Activated CD8-positive, alpha-beta T cell treated with anti-CD3 and anti-CD28 coated beads, Interleukin-2, amount 10 ng/mL, durations not matched to agents 7 days and 5 days (primary cell): ENCODE measurements at regions of chr19 and their contacts with region 1.

Region 1: DNA sequence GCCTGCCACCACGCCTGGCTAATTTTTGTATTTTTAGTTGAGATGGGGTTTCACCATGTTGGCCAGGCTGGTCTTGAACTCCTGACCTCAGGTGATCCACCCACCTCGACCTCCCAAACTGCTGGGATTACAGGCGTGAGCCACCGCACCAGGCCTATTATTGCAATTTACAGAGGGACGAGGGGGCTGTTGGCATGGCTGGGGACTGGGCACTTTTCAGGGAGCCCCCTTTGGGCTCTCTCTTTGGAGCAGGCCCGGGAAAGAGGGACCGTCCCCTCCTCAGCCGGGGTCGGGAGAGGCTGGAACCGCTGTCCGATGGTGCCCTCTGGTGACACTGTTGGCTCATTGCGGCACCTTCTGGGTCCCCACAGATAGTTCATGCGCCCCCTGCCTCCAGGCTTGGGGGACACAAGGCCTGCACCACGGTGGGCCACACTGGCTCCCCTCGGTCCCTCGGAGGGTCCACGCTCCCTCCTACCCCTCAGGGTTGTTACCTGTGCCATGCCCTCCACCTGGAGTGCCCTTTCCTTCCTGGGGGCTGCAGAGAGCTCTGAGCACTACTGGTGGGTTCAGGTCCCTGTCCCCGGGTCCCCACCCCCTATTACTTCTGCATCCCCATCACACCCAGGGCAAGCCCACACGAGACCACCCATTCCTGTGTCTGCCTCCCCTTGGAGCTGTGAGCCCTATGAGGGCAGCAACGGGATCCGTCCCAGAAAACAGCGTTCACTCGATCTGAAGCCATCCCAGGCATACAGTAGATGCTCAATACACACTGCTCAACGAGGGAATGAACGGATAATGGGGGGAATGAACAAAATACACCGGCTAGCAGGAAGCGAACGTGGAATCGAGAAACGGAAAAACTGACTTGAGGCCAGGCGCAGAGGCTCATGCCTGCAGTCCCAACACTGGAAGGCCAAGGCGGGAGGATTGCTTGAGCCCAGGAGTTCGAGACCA is 12.5 kb downstream of the FEM1A start:
- DNase-seq: peak; percentile 81
- ATAC-seq: peak; percentile 94
- H3K4me3 Mint-ChIP-seq: no peak overlapping the region
- H3K27ac Mint-ChIP-seq: no peak overlapping the region
- H3K4me1 Mint-ChIP-seq: no peaks in the 10 kb centered on the region
- H3K27me3 Mint-ChIP-seq: no peaks in the 10 kb centered on the region

Region 2: GRCh38 chr19:4624733-4625362 is 179.2 kb before region 1 on chr19:
- CTCF ChIA-PET with region 1: no interaction called
- POLR2A ChIA-PET with region 1: no interaction called
- DNase-seq: no peak
- ATAC-seq: no peak
- H3K4me3 Mint-ChIP-seq: no peak overlapping the region
- H3K27ac Mint-ChIP-seq: no peak overlapping the region
- H3K4me1 Mint-ChIP-seq: no peaks in the 10 kb centered on the region
- H3K27me3 Mint-ChIP-seq: no peaks in the 10 kb centered on the region

Region 3: DNA sequence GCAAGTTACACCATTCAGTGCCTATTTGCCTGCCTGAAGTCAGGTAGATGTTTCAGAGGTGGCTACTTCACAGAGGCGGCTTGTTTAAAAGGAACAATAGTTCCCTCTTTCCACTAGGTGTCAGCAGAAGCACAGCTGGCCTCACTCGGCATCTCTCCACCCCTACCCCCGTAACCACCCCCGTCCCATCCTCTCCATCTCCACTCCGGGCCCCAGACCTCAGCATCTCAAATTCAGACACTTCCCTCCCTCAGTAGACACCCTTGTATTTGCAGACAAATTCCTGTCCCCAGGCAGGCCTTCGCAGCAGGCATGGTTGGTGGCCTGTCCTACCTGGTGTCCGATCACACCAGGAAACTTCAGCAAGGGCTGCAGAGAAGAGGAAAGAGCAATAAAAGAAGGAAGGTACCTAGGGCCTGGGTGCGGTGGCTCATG is 71.3 kb before region 1 on chr19:
- CTCF ChIA-PET with region 1: interaction called, 21 read pairs
- POLR2A ChIA-PET with region 1: no interaction called
- DNase-seq: peak; percentile 70
- ATAC-seq: peak; percentile 87
- H3K4me3 Mint-ChIP-seq: peak overlapping the region; percentile 16
- H3K27ac Mint-ChIP-seq: no peak overlapping the region
- H3K4me1 Mint-ChIP-seq: peaks cover 13% of the 10 kb centered on the region
- H3K27me3 Mint-ChIP-seq: peaks cover 4% of the 10 kb centered on the region

Region 4: DNA sequence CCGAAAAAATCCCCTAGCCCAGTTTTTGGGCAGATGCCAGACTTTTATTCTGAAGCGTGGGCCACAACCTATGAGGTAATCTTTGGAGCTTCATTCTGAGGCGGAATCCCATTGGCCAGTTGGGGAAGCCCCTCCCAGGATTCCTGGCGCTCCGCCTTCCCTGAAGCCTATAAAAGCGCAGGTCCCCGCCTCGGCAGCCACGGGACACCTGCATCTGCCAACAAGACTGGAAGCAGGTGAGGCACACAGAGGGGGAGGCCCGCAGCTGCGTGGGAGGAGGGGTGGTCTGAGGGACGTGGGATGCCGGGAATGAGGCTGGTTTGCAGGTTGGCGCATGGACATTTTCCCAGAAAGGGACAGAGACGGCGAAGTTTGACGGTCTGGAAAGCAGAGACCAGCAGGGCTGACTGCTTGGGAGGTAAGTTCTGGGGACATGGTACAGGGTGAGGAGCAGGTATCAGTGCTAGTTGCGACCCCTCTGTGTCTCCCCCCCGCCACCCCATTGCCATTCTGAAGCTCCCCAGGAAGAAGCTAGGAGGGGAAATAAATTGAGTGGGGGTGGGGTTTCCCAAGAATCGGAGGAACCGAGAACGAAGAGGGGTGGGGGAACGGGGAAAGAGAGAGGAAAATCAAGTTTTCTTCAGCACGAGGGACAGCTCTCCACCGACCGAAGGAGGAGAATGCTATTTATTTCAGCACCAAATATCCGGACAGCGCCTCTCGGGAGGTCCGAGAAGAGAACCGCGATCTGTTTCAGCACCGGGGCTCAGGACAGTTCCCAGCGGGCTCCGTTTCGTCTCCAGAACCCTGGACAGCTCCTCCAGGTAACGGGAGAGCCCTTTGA is 34.9 kb before region 1 on chr19:
- CTCF ChIA-PET with region 1: no interaction called
- POLR2A ChIA-PET with region 1: no interaction called
- DNase-seq: peak; percentile 91
- ATAC-seq: peak; percentile 86
- H3K4me3 Mint-ChIP-seq: no peak overlapping the region
- H3K27ac Mint-ChIP-seq: no peak overlapping the region
- H3K4me1 Mint-ChIP-seq: no peaks in the 10 kb centered on the region
- H3K27me3 Mint-ChIP-seq: peaks cover 2% of the 10 kb centered on the region

Region 5: DNA sequence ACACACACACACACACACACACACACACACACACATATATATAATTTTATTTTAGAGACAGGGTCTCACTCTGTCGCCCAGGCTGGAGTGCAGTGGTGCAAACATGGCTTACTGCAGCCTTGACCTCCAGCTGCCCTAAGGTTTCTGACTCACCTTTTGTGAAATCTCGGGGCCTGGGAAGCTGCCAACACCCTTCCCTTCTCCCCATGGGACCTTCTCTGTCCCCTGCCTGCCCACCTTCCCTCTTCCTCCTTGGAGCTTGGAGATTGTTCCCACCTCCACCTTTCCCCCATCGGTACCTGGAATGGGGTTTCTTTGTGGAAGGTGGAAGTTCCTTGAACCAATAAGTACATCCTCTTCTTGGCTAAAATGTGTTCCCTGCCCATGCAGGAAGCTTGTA is 92.4 kb after region 1 on chr19:
- CTCF ChIA-PET with region 1: no interaction called
- POLR2A ChIA-PET with region 1: no interaction called
- DNase-seq: no peak
- ATAC-seq: no peak
- H3K4me3 Mint-ChIP-seq: no peak overlapping the region
- H3K27ac Mint-ChIP-seq: no peak overlapping the region
- H3K4me1 Mint-ChIP-seq: peaks cover 4% of the 10 kb centered on the region
- H3K27me3 Mint-ChIP-seq: no peaks in the 10 kb centered on the region